Heart right ventricle (tissue), 16 donors: ENCODE measurements at regions of chr5 and their contacts with region 1.

Region 1: GRCh38 chr5:94524841-94525697 is 93.3 kb downstream of the KIAA0825 start:
- DNase-seq: no peak
- ATAC-seq: peak in 2 of 8 donors; percentile 54 to 63
- H3K4me3 ChIP-seq: no peak overlapping the region
- H3K27ac ChIP-seq: no peak overlapping the region
- H3K4me1 ChIP-seq: peaks cover 0 to 6% (median 0%) of the 10 kb centered on the region in 9 donors
- H3K27me3 ChIP-seq: no peaks in the 10 kb centered on the region
- CTCF ChIP-seq: peak in 8 of 9 donors; percentile 19 to 71 (median 59)

Region 2: DNA sequence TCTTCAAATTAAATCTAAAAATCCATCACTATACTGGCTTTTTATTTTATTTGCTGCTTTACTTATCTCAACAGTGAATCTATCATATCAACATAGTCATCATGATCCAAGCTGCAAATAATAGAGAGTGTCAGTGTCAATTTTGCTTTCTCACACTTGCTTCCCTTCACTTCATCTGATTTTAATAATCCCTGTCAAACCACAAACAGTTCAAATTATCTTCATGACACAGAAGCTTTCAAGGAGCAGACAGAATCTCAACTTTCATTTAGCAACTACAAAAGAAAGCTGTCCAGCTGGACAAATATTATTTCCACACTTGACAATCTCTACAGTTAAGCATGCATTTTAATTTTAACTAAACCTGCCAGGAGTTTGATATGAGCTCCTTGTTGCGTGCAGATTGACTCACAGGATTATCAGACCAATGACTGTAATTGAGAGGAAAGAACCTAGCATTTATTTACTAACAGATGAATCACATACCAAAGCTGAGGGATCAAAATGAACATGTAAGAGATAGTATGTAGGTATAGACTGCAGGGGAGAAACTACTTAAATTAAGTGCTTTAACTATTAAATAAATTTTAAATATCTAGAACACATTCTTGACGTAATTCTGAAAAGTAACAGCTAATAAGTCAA is 37.4 kb after region 1 on chr5:
- intact Hi-C with region 1: no loop called
- DNase-seq: no peak
- ATAC-seq: no peak
- H3K4me3 ChIP-seq: no peak overlapping the region
- H3K27ac ChIP-seq: no peak overlapping the region
- H3K4me1 ChIP-seq: no peaks in the 10 kb centered on the region
- H3K27me3 ChIP-seq: no peaks in the 10 kb centered on the region
- CTCF ChIP-seq: no peak

Region 3: GRCh38 chr5:94621763-94622162 is 96.7 kb after region 1 on chr5:
- intact Hi-C with region 1: loop called in 1 of 10 experiments (anchors 10 kb)
- DNase-seq: no peak
- ATAC-seq: no peak
- H3K4me3 ChIP-seq: no peak overlapping the region
- H3K27ac ChIP-seq: peak overlapping the region in 4 of 10 donors; percentile 4 to 45 (median 24)
- H3K4me1 ChIP-seq: peaks cover 0 to 44% (median 24%) of the 10 kb centered on the region in 9 donors
- H3K27me3 ChIP-seq: no peaks in the 10 kb centered on the region
- CTCF ChIP-seq: no peak

Region 4: GRCh38 chr5:94693043-94693822 is 168.2 kb after region 1 on chr5:
- intact Hi-C with region 1: loop called in 2 of 10 experiments (anchors 5 kb)
- DNase-seq: no peak
- ATAC-seq: peak in 5 of 8 donors; percentile 49 to 79 (median 62)
- H3K4me3 ChIP-seq: no peak overlapping the region
- H3K27ac ChIP-seq: peak overlapping the region in 1 of 10 donors; percentile 35
- H3K4me1 ChIP-seq: peaks cover 0 to 20% (median 5%) of the 10 kb centered on the region in 9 donors
- H3K27me3 ChIP-seq: no peaks in the 10 kb centered on the region
- CTCF ChIP-seq: peak in 8 of 9 donors; percentile 7 to 58 (median 44)

Region 5: DNA sequence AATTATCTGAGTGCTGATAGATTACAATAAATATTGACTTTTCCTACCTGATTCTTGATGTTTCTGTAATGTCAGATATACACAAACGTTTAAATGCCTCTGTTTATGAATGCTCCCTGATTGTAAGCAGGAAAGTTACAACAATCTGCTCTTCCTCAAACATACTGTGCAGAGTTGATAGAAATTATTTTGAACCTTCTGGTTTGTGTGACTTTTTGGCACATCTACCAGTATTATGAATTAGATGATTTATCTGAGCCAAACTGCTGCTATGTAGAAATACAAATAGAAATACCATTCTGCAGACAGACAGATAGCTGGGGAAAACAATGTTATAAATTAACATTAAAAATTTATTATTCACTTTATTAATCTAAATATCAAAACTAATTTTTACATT is 206.4 kb after region 1 on chr5:
- intact Hi-C with region 1: loop called in 8 of 10 experiments (anchors 5 to 10 kb)
- DNase-seq: no peak
- ATAC-seq: no peak
- H3K4me3 ChIP-seq: no peak overlapping the region
- H3K27ac ChIP-seq: no peak overlapping the region
- H3K4me1 ChIP-seq: peaks cover 0 to 5% (median 0%) of the 10 kb centered on the region in 9 donors
- H3K27me3 ChIP-seq: no peaks in the 10 kb centered on the region
- CTCF ChIP-seq: no peak

Region 6: DNA sequence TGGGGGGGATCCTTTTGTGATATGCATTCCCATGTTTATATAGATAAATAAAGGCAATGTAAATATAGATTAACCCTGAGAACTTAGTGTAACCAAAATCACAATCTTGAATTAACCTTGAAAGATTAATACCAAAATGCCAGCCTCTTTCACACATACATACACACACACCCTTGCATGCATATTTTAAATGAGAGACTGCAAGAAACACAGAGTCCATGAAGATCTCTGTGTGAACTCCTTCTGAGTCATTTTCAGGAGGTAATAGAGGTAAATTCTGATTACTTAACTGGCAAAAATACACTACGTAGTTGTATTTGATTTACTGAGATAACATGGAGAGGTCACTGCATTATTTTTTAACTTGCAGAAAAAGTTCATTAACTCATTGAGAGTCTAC is 211.4 kb after region 1 on chr5:
- intact Hi-C with region 1: loop called in 8 of 10 experiments (anchors 5 to 10 kb)
- DNase-seq: no peak
- ATAC-seq: no peak
- H3K4me3 ChIP-seq: no peak overlapping the region
- H3K27ac ChIP-seq: no peak overlapping the region
- H3K4me1 ChIP-seq: peaks cover 0 to under 1% (median 0%) of the 10 kb centered on the region in 9 donors
- H3K27me3 ChIP-seq: no peaks in the 10 kb centered on the region
- CTCF ChIP-seq: no peak